ENCODE measurements at regions of chr1 and their contacts with region 1.

Region 1: GRCh38 chr1:36099681-36100341 is 11.1 kb downstream of the ADPRS start:
- DNase-seq: peak; percentile 81 to 95 (median 93)
- ATAC-seq: peak; percentile 79 to 83
- H3K4me3 ChIP-seq: no peak overlapping the region
- H3K27ac ChIP-seq: no peak overlapping the region
- H3K4me1 ChIP-seq: no peaks in the 10 kb centered on the region
- H3K27me3 ChIP-seq: no peaks in the 10 kb centered on the region

Region 2: GRCh38 chr1:36134505-36135329 is 34.9 kb after region 1 on chr1:
- intact Hi-C with region 1: loop called in 3 of 4 experiments (anchors 2 to 5 kb)
- DNase-seq: peak; percentile 58 to 81 (median 74)
- ATAC-seq: peak; percentile 62 to 73
- H3K4me3 ChIP-seq: no peak overlapping the region
- H3K27ac ChIP-seq: peak overlapping the region; percentile 63
- H3K4me1 ChIP-seq: peaks cover 7% of the 10 kb centered on the region
- H3K27me3 ChIP-seq: no peaks in the 10 kb centered on the region

Region 3: DNA sequence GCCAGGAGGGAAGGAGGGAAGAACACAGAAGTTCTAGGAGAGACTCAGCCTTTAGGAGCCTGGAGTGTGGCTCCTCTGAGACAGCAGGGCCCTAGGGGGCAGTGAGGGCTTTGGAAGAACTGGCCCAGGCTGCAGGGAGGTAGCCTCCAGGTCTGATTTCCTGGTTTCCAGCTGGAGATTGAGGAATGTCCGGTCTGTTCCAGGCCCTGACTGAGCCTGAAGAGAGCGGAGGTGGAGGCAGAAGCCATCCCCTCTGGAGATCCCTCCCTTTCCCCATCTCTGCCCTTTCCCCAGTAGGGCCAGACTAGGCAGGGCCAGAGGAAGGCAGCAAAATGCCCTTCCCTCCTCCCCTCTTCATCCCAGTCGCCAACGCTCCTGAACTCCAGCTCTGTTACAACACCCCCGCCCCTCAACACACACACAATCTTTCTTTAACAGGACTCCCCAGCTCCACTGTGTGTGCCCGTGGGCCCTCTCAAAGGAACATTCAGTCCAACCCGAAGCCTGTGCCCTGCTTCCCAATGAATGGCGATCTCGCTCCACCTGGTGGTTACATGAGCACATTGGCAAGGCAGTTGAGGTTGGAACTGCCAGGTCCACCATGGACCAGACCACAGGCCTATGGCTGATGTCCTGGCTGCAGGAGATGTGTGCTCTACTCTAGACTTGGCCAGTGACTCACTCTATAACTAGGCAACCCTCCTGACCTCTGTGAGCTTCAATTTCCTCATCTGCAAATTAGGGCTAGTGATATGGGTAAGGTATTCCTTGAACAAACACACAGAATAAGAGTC is 88.2 kb after region 1 on chr1:
- intact Hi-C with region 1: loop called in 1 of 4 experiments (anchors 10 kb)
- DNase-seq: peak; percentile 87 to 92 (median 91)
- ATAC-seq: peak; percentile 92 to 94
- H3K4me3 ChIP-seq: no peak overlapping the region
- H3K27ac ChIP-seq: peak overlapping the region; percentile 93
- H3K4me1 ChIP-seq: peaks cover 3% of the 10 kb centered on the region
- H3K27me3 ChIP-seq: no peaks in the 10 kb centered on the region

Region 4: GRCh38 chr1:36420836-36421664 is 321.2 kb after region 1 on chr1:
- intact Hi-C with region 1: loop called in 3 of 4 experiments (anchors 5 kb)
- DNase-seq: peak; percentile 84 to 96 (median 94)
- ATAC-seq: peak; percentile 89 to 94
- H3K4me3 ChIP-seq: no peak overlapping the region
- H3K27ac ChIP-seq: no peak overlapping the region
- H3K4me1 ChIP-seq: no peaks in the 10 kb centered on the region
- H3K27me3 ChIP-seq: no peaks in the 10 kb centered on the region

Measured in right cardiac atrium (tissue), 5 donors.